HepG2 (cell line): ENCODE measurements at regions of chr18 and their contacts with region 1.

Region 1: GRCh38 chr18:23629444-23629946 is 33.2 kb downstream of the ANKRD29 start:
- DNase-seq: peak; percentile 92
- ATAC-seq: peak; percentile 95
- H3K4me3 ChIP-seq: no peak overlapping the region
- H3K27ac ChIP-seq: no peak overlapping the region
- H3K4me1 ChIP-seq: peaks cover 36% of the 10 kb centered on the region
- H3K27me3 ChIP-seq: peaks cover 0 to 4% of the 10 kb centered on the region in 2 experiments; a peak in 2 of 5 replicates
- CTCF ChIP-seq: no peak
- EP300 ChIP-seq: peak in 1 of 2 experiments; percentile 62; a peak in 1 of 4 replicates
- POLR2A ChIP-seq: no peak
- RAD21 ChIP-seq: no peak

Region 2: DNA sequence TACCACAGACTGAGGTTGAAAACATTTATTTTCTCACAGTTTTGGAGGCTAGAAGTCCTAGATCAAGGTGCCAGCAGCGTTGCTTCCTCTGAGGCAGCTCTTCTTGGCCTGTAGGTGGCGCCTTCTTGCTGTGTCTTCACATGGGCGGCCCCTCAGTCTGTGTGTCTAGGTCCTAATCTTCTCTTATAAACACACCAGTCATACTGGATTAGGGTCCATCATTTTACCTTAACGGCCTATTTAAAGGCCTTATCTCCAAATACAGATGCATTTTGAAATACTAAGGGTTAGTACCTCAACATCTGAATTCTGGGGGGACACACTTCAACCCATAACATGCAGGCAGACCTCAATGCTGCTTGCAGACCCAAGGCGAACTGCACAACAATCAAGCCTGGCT is 130.6 kb before region 1 on chr18:
- CTCF ChIA-PET with region 1: no interaction called
- POLR2A ChIA-PET with region 1: no interaction called
- in situ Hi-C with region 1: no loop called
- intact Hi-C with region 1: no loop called
- DNase-seq: peak; percentile 62
- ATAC-seq: peak; percentile 49
- H3K4me3 ChIP-seq: no peak overlapping the region
- H3K27ac ChIP-seq: no peak overlapping the region
- H3K4me1 ChIP-seq: peaks cover 24% of the 10 kb centered on the region
- H3K27me3 ChIP-seq: no peaks in the 10 kb centered on the region
- CTCF ChIP-seq: peak; percentile 88
- EP300 ChIP-seq: no peak
- POLR2A ChIP-seq: no peak
- RAD21 ChIP-seq: no peak; the same call in 1 of the 2 replicates

Region 3: GRCh38 chr18:23650968-23651927 is 21.8 kb after region 1 on chr18:
- CTCF ChIA-PET with region 1: no interaction called
- POLR2A ChIA-PET with region 1: no interaction called
- in situ Hi-C with region 1: no loop called
- intact Hi-C with region 1: no loop called
- DNase-seq: peak; percentile 66
- ATAC-seq: peak; percentile 42; the same call in 1 of the 3 replicates
- H3K4me3 ChIP-seq: no peak overlapping the region
- H3K27ac ChIP-seq: no peak overlapping the region
- H3K4me1 ChIP-seq: peaks cover 13% of the 10 kb centered on the region
- H3K27me3 ChIP-seq: peaks cover 0 to 9% of the 10 kb centered on the region in 2 experiments; a peak in 2 of 5 replicates
- CTCF ChIP-seq: no peak
- EP300 ChIP-seq: no peak
- POLR2A ChIP-seq: no peak
- RAD21 ChIP-seq: no peak

Region 4: DNA sequence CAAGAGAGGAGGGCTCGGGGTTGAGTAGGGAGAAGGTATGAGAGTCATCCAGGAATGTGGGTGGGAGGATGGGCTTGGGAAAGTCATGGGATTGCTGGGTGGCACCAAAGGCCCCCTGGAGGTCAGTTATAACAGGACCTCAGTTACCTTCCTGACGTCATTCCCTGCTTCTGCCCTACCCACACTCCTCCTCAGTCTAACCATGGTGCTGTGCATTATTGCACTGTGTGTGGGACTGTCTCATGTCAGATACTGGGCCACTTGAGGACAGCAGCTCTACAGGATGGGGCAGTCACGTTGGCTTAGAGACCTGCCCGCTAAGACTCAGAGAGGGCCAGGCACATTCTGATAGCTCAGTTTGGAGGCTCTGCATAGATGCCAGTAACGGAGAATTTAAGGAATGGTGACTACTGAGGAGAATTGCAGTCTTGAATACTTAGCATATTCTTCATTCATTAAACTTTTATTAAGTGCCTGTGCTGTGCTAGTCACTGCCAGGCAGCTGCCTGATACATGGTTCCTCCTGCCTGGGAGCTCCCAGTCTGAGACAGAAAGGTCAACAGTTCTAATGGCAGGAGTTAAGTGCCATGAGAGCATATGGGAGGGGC is 150.3 kb after region 1 on chr18:
- CTCF ChIA-PET with region 1: no interaction called
- POLR2A ChIA-PET with region 1: no interaction called
- in situ Hi-C with region 1: no loop called
- intact Hi-C with region 1: loop called (anchors 10 kb)
- DNase-seq: peak; percentile 54
- ATAC-seq: peak; percentile 91
- H3K4me3 ChIP-seq: no peak overlapping the region
- H3K27ac ChIP-seq: no peak overlapping the region
- H3K4me1 ChIP-seq: no peaks in the 10 kb centered on the region
- H3K27me3 ChIP-seq: peaks cover 0 to 6% of the 10 kb centered on the region in 2 experiments; a peak in 2 of 5 replicates
- CTCF ChIP-seq: no peak
- EP300 ChIP-seq: no peak
- POLR2A ChIP-seq: no peak
- RAD21 ChIP-seq: no peak

Region 5: DNA sequence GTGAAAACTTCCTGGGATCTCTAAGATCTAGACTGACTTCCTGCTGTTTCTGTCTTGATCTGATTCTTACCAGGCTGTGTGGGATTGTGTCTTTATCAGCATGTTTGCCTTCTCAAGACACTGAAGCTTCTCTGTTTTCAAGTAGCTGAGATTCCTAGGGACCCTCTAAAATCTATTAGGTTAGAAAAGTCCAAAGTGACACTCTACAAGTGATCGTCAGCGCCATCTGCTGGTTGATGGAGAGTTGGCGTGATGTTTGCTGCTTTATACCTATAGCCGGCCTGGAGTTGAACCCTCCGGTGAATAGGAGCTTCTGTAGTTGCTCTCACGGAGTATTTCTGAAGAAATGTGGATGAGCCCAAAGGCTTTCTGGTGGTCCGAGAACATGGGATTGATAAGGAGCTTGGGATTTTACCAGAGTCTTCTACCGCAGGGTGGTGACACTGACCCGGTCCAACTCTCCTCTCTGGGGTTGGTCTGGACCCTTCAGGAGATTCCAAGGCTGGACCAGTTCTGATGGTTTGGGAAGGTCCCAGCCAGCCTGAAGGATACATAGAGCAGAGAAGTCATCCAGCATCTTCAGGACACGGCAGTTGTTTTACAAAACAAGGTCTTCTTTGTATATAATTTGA is 289.0 kb after region 1 on chr18:
- CTCF ChIA-PET with region 1: no interaction called
- POLR2A ChIA-PET with region 1: no interaction called
- in situ Hi-C with region 1: no loop called
- intact Hi-C with region 1: loop called (anchors 10 kb)
- DNase-seq: peak; percentile 55
- ATAC-seq: peak; percentile 84
- H3K4me3 ChIP-seq: no peak overlapping the region
- H3K27ac ChIP-seq: no peak overlapping the region
- H3K4me1 ChIP-seq: no peaks in the 10 kb centered on the region
- H3K27me3 ChIP-seq: no peaks in the 10 kb centered on the region; a peak in 1 of 5 replicates
- CTCF ChIP-seq: peak; percentile 83
- EP300 ChIP-seq: no peak
- POLR2A ChIP-seq: no peak
- RAD21 ChIP-seq: peak; percentile 57; the same call in 1 of the 2 replicates